PC-3 (cell line): ENCODE measurements at regions of chr1 and their contacts with region 1.

Region 1: GRCh38 chr1:20485527-20486456 is at the start of gene CAMK2N1:
- DNase-seq: peak; percentile 73
- ATAC-seq: peak; percentile 54
- H3K4me3 ChIP-seq: peak within 1 kb of the TSS; percentile 98
- H3K27ac ChIP-seq: peak within 1 kb of the TSS; percentile 87
- H3K4me1 ChIP-seq: peaks cover 32% of the 10 kb centered on the region
- H3K27me3 ChIP-seq: peaks cover 6% of the 10 kb centered on the region
- CTCF ChIP-seq: no peak
- total RNA-seq, gene CAMK2N1: 51.2 and 56.9 TPM in 2 replicates

Region 2: DNA sequence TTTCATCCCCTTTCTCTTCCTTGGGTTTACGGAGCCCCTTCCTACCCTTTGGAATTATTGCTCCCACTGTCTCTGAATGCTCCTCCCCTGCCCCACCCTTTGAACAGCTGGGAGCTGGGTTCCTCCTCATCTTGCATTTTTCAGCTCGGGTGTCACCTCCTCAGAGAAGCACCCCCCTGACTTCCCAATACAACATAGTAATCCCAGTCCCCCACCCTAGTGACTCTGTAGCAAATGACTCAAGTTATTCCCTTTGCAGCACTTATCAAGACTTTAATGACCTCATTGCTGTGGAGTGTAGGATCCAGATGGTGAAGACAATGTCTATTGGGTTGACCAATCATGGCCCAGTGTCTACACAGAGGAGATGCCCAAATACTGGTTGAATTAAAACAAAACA is 204.0 kb before region 1 on chr1:
- CTCF ChIA-PET with region 1: interaction called, 13 read pairs
- POLR2A ChIA-PET with region 1: no interaction called
- intact Hi-C with region 1: no loop called
- DNase-seq: peak; percentile 25
- ATAC-seq: no peak
- H3K4me3 ChIP-seq: no peak overlapping the region
- H3K27ac ChIP-seq: no peak overlapping the region
- H3K4me1 ChIP-seq: peaks cover 13% of the 10 kb centered on the region
- H3K27me3 ChIP-seq: no peaks in the 10 kb centered on the region
- CTCF ChIP-seq: no peak

Region 3: GRCh38 chr1:20426923-20427322 is 58.9 kb before region 1 on chr1:
- CTCF ChIA-PET with region 1: no interaction called
- POLR2A ChIA-PET with region 1: no interaction called
- intact Hi-C with region 1: no loop called
- DNase-seq: peak; percentile 86
- ATAC-seq: peak; percentile 89
- H3K4me3 ChIP-seq: no peak overlapping the region
- H3K27ac ChIP-seq: peak overlapping the region; percentile 67
- H3K4me1 ChIP-seq: peaks cover 13% of the 10 kb centered on the region
- H3K27me3 ChIP-seq: no peaks in the 10 kb centered on the region
- CTCF ChIP-seq: no peak